AG04450 (cell line): ENCODE measurements at regions of chr15 and their contacts with region 1.

Region 1: DNA sequence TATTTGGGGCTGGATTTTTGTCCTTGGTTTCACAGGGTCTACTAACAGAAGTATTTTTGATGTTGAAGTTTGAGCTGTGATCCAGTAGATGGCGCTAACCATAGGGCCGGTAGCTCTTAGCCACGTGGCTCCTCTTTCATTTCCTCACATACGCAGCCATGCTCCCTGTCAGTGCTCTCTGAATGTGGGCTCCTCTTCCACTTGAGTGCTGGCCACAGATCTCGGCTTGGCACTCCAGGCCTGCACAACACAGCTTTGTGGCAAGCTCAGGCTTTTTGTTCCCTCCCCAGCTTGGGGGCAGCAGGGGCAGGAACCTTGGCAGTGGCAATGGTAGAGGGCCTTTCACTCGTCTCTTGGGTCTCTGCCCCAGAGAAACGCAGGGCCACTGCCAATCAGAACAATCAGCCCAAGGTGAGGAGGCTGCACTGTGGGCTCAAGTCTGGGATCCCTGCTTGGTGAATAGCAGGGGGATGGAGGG is 18.6 kb upstream of the DNAAF4 start:
- DNase-seq: peak; percentile 30
- H3K4me3 ChIP-seq: no peak overlapping the region
- H3K27ac ChIP-seq: no peak overlapping the region
- H3K27me3 ChIP-seq: no peaks in the 10 kb centered on the region
- CTCF ChIP-seq: peak; percentile 76

Region 2: GRCh38 chr15:55389276-55389631 is 137.3 kb before region 1 on chr15:
- CTCF ChIA-PET with region 1: no interaction called
- POLR2A ChIA-PET with region 1: no interaction called
- DNase-seq: no peak
- H3K4me3 ChIP-seq: no peak overlapping the region
- H3K27ac ChIP-seq: no peak overlapping the region
- H3K27me3 ChIP-seq: no peaks in the 10 kb centered on the region
- CTCF ChIP-seq: no peak

Region 3: DNA sequence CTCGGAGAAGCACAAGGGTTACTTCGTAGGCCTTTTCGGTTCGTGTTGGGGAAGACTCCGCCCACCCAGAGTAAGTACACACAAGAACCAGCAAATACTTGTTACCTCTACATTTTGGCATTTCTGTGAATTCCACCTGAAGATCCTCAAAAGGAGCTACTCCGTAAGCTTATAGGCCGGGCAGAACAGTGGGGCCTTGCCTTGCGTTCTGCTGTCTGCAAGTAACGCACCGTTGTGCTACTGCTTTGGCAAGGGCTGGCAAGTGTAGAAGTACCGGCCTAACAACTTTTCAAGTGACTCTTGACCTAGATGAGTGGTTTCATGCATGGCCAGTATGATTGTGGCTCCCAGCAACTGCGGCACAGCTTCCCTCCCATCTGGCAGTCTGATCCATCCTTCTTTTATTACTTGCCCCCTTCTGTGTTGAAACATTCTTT is 12.2 kb before region 1 on chr15:
- CTCF ChIA-PET with region 1: interaction called, 12 read pairs
- POLR2A ChIA-PET with region 1: interaction called, 5 read pairs
- DNase-seq: no peak
- H3K4me3 ChIP-seq: no peak overlapping the region
- H3K27ac ChIP-seq: no peak overlapping the region
- H3K27me3 ChIP-seq: no peaks in the 10 kb centered on the region
- CTCF ChIP-seq: no peak

Region 4: GRCh38 chr15:55637086-55637485 is 110.5 kb after region 1 on chr15:
- CTCF ChIA-PET with region 1: interaction called, 19 read pairs
- POLR2A ChIA-PET with region 1: no interaction called
- DNase-seq: no peak
- H3K4me3 ChIP-seq: no peak overlapping the region
- H3K27ac ChIP-seq: no peak overlapping the region
- H3K27me3 ChIP-seq: no peaks in the 10 kb centered on the region
- CTCF ChIP-seq: no peak